ENCODE measurements at regions of chr10 and their contacts with region 1.

Region 1: GRCh38 chr10:116014871-116015582 is 258.0 kb downstream of the GFRA1 start:
- DNase-seq: no peak
- H3K4me3 ChIP-seq: no peak overlapping the region
- H3K27ac ChIP-seq: no peak overlapping the region
- H3K4me1 ChIP-seq: no peaks in the 10 kb centered on the region
- H3K27me3 ChIP-seq: no peaks in the 10 kb centered on the region
- CTCF ChIP-seq: no peak

Region 2: GRCh38 chr10:115747811-115748210 is 267.2 kb before region 1 on chr10:
- CTCF ChIA-PET with region 1: no interaction called
- dilution Hi-C with region 1: no loop called
- in situ Hi-C with region 1: no loop called
- intact Hi-C with region 1: no loop called
- DNase-seq: no peak
- H3K4me3 ChIP-seq: no peak overlapping the region
- H3K27ac ChIP-seq: no peak overlapping the region
- H3K4me1 ChIP-seq: no peaks in the 10 kb centered on the region
- H3K27me3 ChIP-seq: no peaks in the 10 kb centered on the region
- CTCF ChIP-seq: no peak

Region 3: GRCh38 chr10:116093031-116093430 is 78.0 kb after region 1 on chr10:
- CTCF ChIA-PET with region 1: no interaction called
- dilution Hi-C with region 1: loop called (anchors 5 kb)
- in situ Hi-C with region 1: no loop called
- intact Hi-C with region 1: no loop called
- DNase-seq: no peak
- H3K4me3 ChIP-seq: no peak overlapping the region
- H3K27ac ChIP-seq: no peak overlapping the region
- H3K4me1 ChIP-seq: no peaks in the 10 kb centered on the region
- H3K27me3 ChIP-seq: no peaks in the 10 kb centered on the region
- CTCF ChIP-seq: no peak

Measured in mammary epithelial cell (primary cell).